ENCODE measurements at regions of chr7 and their contacts with region 1.

Region 1: GRCh38 chr7:106190589-106191330 is 78.6 kb upstream of the SYPL1 start:
- DNase-seq: no peak
- H3K4me3 ChIP-seq: no peak overlapping the region
- H3K4me3 Mint-ChIP-seq: no peak overlapping the region
- H3K27ac Mint-ChIP-seq: no peak overlapping the region
- H3K4me1 ChIP-seq: no peaks in the 10 kb centered on the region
- H3K4me1 Mint-ChIP-seq: peaks cover 6% of the 10 kb centered on the region
- H3K27me3 ChIP-seq: no peaks in the 10 kb centered on the region
- H3K27me3 Mint-ChIP-seq: peaks cover 3% of the 10 kb centered on the region
- CTCF ChIP-seq: no peak

Region 2: DNA sequence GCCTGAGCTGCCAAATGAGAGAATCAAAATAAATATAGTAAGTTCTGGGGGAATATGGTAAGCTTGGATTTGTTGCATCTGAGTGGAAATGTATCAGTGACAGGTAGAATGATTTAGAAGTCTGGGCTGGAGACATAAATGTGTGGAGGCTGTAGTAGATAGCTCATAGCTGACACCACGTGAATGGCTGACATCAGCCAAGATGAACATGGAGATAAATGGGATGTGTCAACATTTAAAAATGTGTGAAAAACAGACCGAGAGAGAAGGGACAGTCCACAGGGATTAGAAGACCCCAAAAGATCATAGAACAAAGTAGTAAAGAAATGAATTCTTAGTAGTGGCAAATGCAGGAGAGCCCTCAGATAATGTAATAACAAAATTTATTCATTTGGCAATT is 53.1 kb after region 1 on chr7:
- CTCF ChIA-PET with region 1: no interaction called
- POLR2A ChIA-PET with region 1: no interaction called
- intact Hi-C with region 1: loop called (anchors 10 kb)
- DNase-seq: no peak
- H3K4me3 ChIP-seq: no peak overlapping the region
- H3K4me3 Mint-ChIP-seq: no peak overlapping the region
- H3K27ac Mint-ChIP-seq: no peak overlapping the region
- H3K4me1 ChIP-seq: no peaks in the 10 kb centered on the region
- H3K4me1 Mint-ChIP-seq: peaks cover 8% of the 10 kb centered on the region
- H3K27me3 ChIP-seq: no peaks in the 10 kb centered on the region
- H3K27me3 Mint-ChIP-seq: no peaks in the 10 kb centered on the region
- CTCF ChIP-seq: no peak